HEK293 (cell line): ENCODE measurements at regions of chr12 and their contacts with region 1.

Region 1: DNA sequence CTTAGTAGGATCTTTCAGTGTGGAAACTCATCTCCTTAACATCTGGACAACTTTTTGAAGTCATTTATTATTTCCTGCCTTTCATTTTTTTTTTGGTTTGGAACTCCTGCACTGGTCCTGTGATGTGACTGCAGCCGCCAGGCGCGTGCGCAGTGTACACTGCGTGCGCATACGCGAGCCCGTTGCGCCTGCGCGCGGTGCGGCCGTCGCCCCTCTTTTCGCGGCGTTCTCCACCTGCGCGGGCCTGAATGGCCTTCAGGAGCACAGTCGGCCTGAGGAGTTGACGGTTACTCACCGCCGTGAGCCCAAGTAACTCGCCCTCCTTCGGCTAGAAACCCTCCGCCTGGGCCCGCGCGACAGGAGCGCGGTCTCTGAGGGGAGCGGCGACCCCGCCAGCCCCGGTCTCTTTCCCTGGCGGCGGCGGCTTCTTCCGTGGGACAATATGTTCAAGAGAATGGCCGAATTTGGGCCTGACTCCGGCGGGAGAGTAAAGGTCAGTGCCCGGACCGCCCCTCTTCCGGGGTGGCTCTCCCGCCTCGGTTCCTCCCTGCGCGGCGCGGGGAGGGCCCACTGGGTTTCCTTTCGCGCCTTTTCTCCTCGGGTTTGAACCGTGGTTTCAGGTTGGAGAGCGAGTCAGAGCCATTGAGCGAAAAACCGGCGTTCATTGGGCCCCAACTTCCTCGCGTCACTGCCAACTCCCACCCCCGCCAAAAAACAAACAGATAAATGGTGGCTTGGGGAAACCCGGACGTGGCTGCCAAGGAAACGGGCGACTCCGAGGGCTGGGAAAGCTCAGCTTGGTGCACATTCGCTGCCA is at the start of gene YEATS4:
- H3K4me3 ChIP-seq: peak within 1 kb of the TSS; percentile 97
- H3K27ac ChIP-seq: peak within 1 kb of the TSS; percentile 98
- H3K4me1 ChIP-seq: peaks cover 3% of the 10 kb centered on the region; the same call in 1 of the 2 replicates
- CTCF ChIP-seq: no peak

Region 2: DNA sequence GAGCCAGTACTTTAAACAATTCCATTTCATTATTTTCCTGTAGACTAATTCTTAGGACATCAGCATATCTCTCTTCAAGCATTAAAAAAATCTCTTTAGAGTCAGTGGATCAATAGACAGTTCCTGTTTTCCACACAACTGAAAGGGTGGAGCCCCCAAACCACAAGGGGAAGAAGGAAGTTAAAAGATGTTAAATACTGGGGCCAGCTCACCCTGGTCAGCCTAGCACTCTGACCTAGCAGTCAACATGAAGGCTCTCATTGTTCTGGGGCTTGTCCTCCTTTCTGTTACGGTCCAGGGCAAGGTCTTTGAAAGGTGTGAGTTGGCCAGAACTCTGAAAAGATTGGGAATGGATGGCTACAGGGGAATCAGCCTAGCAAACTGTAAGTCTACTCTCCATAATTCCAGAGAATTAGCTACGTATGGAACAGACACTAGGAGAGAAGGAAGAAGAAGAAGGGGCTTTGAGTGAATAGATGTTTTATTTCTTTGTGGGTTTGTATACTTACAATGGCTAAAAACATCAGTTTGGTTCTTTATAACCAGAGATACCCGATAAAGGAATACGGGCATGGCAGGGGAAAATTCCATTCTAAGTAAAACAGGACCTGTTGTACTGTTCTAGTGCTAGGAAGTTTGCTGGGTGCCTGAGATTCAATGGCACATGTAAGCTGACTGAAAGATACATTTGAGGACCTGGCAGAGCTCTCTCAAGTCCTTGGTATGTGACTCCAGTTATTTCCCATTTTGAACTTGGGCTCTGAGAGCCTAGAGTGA is 11.4 kb before region 1 on chr12 and contains the start of gene LYZ:
- CTCF ChIA-PET with region 1: interaction called, 12 read pairs
- POLR2A ChIA-PET with region 1: no interaction called
- H3K4me3 ChIP-seq: no peak within 1 kb of the TSS
- H3K27ac ChIP-seq: no peak within 1 kb of the TSS
- H3K4me1 ChIP-seq: no peaks in the 10 kb centered on the region
- CTCF ChIP-seq: no peak

Region 3: DNA sequence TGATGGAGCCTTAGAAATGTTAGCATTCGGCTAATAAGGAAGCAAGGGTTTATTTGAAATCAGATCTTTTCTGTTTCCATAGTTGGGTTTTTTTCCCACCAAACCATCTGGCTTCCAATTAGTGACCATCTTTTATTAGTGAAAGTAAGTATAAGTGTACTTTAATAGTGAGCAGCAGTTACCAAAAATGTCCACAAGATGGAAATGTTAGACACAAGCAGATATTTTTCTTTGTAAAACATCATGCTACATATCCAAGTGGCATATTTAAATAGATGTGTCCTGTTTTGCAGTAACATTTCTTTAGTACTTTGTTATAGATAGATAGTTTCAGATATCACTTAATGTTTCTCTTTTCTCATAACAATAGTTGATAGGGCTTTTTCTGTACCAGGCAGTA is 28.6 kb after region 1 on chr12:
- CTCF ChIA-PET with region 1: interaction called, 11 read pairs
- POLR2A ChIA-PET with region 1: no interaction called
- H3K4me3 ChIP-seq: no peak overlapping the region
- H3K27ac ChIP-seq: no peak overlapping the region
- H3K4me1 ChIP-seq: no peaks in the 10 kb centered on the region
- CTCF ChIP-seq: no peak